Activated CD8-positive, alpha-beta T cell treated with anti-CD3 and anti-CD28 coated beads, Interleukin-2, amount 10 ng/mL, durations not matched to agents 7 days and 5 days (primary cell): ENCODE measurements at regions of chr12 and their contacts with region 1.

Region 1: DNA sequence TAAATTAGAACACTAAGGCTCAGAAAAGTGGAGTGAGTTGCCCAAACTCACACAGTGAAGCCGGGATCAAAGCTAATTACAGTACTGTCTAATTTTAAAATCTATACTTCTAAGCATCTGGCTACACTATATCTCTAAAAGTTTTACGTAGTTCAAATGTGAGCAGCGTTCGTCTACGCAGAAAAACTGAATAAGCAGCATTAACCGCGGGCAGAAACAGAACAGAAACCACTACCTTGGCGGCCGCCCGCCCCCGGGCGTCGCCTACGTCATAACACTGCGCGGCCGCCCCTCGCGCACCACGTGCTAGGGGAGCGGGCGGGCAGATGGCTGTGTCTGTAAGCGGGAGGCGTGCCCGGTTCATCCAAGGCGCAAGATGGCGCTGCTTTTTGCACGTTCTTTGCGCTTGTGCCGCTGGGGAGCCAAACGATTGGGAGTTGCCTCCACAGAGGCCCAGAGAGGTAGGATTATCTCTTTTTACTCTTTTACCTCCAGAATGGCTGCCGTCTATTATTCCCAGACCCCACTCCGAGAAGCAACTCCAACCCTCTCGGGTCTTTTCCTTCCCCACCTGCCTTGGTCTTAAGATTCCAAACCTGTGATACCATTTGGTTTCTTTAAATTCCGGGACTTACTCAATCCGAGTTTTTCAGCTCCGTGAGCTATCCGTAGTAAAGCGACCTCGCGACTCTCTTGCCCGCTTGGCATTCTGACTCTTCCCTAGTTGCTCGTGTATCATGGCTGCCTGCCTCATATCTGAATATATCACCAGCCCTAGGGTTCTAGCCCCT is at the start of gene SPRYD4:
- DNase-seq: peak; percentile 95
- ATAC-seq: peak; percentile 97
- H3K4me3 Mint-ChIP-seq: peak within 1 kb of the TSS; percentile 87
- H3K27ac Mint-ChIP-seq: peak within 1 kb of the TSS; percentile 93
- H3K4me1 Mint-ChIP-seq: peaks cover 28% of the 10 kb centered on the region
- H3K27me3 Mint-ChIP-seq: no peaks in the 10 kb centered on the region
- total RNA-seq, gene SPRYD4: 2.9 to 3.1 TPM

Region 2: GRCh38 chr12:56117778-56118687 is 350.4 kb before region 1 on chr12 and contains the start of gene ZC3H10:
- CTCF ChIA-PET with region 1: interaction called, 10 read pairs
- POLR2A ChIA-PET with region 1: interaction called, 4 read pairs
- DNase-seq: peak; percentile 100
- ATAC-seq: peak; percentile 76
- H3K4me3 Mint-ChIP-seq: peak within 1 kb of the TSS; percentile 100
- H3K27ac Mint-ChIP-seq: peak within 1 kb of the TSS; percentile 100
- H3K4me1 Mint-ChIP-seq: peaks cover 39% of the 10 kb centered on the region
- H3K27me3 Mint-ChIP-seq: no peaks in the 10 kb centered on the region
- total RNA-seq, gene ZC3H10: 9.1 to 10.6 TPM

Region 3: DNA sequence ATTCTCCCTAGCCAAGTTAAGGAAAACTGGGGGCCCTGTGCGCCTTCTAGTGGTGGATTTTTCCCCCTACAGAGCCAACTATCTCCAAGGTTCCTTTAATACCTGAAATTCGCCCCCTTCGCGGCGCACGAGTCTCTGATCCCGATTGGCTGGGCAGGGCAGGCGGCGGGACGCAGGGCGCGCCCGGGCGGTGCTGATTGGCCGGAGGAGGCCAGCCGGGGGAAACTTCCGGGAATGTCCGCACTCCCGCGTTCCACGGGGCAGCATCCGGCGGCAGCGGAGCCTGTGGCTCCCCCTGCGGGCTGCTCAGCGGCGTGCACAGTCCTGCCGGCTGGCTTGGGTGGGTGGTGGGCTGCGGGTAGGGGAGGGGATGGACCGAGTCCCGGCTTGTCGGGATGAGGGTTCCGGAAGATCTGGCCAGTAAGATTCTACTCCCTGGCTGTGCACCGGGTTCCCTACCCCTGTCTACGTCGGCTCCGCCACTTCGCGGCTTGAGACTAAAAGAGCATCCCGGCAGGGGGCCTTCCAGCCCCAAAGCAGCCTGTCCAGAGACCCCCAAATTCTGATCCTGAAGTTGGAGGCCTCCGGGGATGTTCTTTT is 244.2 kb before region 1 on chr12 and contains the start of gene NABP2:
- CTCF ChIA-PET with region 1: interaction called, 11 read pairs
- POLR2A ChIA-PET with region 1: no interaction called
- DNase-seq: peak; percentile 96
- ATAC-seq: peak; percentile 87
- H3K4me3 Mint-ChIP-seq: peak within 1 kb of the TSS; percentile 91
- H3K27ac Mint-ChIP-seq: peak within 1 kb of the TSS; percentile 85
- H3K4me1 Mint-ChIP-seq: peaks cover 54% of the 10 kb centered on the region
- H3K27me3 Mint-ChIP-seq: no peaks in the 10 kb centered on the region
- total RNA-seq, gene NABP2: 64.3 to 69.5 TPM

Region 4: GRCh38 chr12:56299853-56300643 is 168.4 kb before region 1 on chr12 and contains the start of gene CS:
- CTCF ChIA-PET with region 1: interaction called, 12 read pairs
- POLR2A ChIA-PET with region 1: no interaction called
- DNase-seq: peak; percentile 99
- ATAC-seq: peak; percentile 97
- H3K4me3 Mint-ChIP-seq: peak within 1 kb of the TSS; percentile 97
- H3K27ac Mint-ChIP-seq: peak within 1 kb of the TSS; percentile 91
- H3K4me1 Mint-ChIP-seq: peaks cover 52% of the 10 kb centered on the region
- H3K27me3 Mint-ChIP-seq: no peaks in the 10 kb centered on the region
- total RNA-seq, gene CS: 218 to 228 TPM

Region 5: DNA sequence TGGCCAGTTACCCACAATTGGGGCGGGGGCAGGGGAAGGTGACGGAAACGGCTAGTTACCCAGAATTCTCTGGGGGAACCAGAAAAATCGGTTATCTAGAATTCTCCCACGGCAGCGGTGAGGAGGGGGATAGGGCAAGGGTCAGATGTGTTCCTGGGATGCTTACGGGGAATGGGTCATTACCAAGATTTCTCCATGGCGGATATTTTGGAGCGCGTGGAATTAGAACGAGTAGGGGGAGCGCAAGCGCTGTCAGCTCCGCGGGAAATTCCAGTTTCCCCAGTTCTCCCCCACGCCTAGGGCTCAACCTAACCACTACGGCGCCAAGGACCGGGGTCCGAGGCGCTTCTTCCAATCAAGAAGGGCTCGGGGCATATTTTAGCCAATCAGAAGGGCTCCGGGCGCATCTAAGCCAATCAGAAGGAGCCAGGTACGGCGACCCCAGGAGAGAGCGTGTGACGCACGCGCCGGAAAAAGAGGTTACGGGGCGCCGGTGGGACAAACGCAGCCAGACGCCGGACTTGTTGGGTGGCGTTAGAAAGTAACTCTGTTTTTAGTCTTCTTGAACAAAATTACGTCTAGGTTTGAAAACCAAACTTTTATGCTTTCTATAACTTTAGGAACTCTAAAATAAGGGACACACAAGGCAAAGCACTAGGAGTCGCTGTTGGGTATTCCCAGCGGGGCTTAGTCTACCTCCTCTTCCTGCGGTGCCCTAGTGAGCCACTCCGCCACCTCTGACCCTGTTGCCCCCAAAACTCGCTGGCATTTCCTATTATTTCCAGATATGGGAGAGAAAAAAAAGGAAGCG is 134.5 kb before region 1 on chr12 and contains the start of gene PAN2:
- CTCF ChIA-PET with region 1: interaction called, 19 read pairs
- POLR2A ChIA-PET with region 1: no interaction called
- DNase-seq: peak; percentile 97
- ATAC-seq: peak; percentile 94
- H3K4me3 Mint-ChIP-seq: peak within 1 kb of the TSS; percentile 96
- H3K27ac Mint-ChIP-seq: peak within 1 kb of the TSS; percentile 99
- H3K4me1 Mint-ChIP-seq: peaks cover 45% of the 10 kb centered on the region
- H3K27me3 Mint-ChIP-seq: no peaks in the 10 kb centered on the region
- total RNA-seq, gene PAN2: 61.8 to 63.7 TPM

Region 6: DNA sequence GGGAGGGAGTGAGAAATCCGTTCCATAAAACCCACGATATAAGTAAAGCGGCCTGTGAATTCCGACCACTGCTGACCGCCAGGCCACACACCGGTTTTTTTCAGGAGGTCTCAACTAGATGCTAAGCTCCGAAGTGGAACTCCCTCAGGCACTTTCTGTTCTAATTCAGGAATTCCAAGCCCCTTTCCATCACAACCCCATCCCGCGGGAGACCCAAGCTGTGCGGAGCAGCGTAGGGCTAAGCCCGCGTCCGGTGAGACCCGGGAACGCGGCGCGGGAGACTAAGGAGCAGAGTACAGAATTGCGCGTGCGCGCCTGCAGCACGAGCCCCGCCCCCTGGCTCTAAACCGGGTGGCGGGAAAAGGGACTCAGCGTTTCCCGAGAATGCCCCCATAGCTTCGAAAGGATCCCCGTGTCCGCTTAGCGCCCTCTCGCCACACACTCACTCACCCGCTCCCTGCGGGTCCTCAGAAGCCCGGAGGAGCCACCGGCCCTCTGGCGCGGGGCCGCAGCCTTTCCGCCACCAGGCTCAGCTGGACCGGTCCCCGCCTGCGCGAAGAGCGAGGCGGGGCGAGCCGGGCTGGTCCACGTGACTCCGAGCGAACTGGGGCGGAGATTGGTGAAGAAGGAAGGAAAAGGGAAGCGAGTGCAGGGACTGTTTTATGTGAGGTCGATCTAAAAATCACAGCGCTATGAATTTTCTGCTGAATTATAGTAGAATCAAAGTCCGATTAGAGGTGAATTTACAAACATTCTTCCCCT is 19.4 kb before region 1 on chr12 and contains the start of gene TIMELESS:
- CTCF ChIA-PET with region 1: interaction called, 59 read pairs
- POLR2A ChIA-PET with region 1: interaction called, 6 read pairs
- DNase-seq: peak; percentile 89
- ATAC-seq: peak; percentile 99
- H3K4me3 Mint-ChIP-seq: peak within 1 kb of the TSS; percentile 91
- H3K27ac Mint-ChIP-seq: peak within 1 kb of the TSS; percentile 87
- H3K4me1 Mint-ChIP-seq: peaks cover 39% of the 10 kb centered on the region
- H3K27me3 Mint-ChIP-seq: peaks cover 2% of the 10 kb centered on the region
- total RNA-seq, gene TIMELESS: 62.7 to 65.7 TPM

Region 7: GRCh38 chr12:56622535-56622934 is 154.1 kb after region 1 on chr12:
- CTCF ChIA-PET with region 1: no interaction called
- POLR2A ChIA-PET with region 1: no interaction called
- DNase-seq: no peak
- ATAC-seq: no peak
- H3K4me3 Mint-ChIP-seq: no peak overlapping the region
- H3K27ac Mint-ChIP-seq: no peak overlapping the region
- H3K4me1 Mint-ChIP-seq: peaks cover 36% of the 10 kb centered on the region
- H3K27me3 Mint-ChIP-seq: no peaks in the 10 kb centered on the region